ENCODE measurements at regions of chr5 and their contacts with region 1.

Region 1: DNA sequence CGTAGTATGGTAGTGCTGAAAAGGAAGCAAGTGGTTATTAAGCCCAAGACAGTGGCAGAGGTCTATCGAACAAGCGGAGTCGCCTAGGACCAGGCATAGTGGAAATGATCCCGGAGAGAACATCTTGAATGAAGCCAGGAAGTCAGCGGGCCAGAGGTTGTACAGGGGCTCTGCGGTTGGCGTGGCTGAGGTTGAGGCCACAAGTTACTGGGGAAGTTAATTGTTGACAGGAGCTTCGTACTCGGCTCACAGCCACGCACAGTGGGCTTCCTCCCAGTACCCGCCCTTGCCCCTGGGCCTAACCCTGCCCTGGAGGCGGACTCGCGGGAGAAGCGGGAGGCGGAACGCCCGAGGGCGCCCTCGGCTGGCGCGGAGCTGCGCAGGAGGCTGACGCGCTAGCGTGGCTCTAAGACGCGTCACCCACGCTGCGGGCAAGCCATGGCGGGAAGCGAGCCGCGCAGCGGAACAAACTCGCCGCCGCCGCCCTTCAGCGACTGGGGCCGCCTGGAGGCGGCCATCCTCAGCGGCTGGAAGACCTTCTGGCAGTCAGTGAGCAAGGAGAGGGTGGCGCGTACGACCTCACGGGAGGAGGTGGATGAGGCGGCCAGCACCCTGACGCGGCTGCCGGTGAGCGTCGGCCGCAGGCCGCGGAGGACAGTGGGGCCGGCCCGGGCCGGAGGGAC is at the start of gene FBXO4:
- DNase-seq: peak; percentile 82 to 89 (median 87)
- H3K4me3 ChIP-seq: peak within 1 kb of the TSS; percentile 71 to 90 (median 81)
- H3K4me3 Mint-ChIP-seq: peak within 1 kb of the TSS; percentile 89 to 92
- H3K27ac ChIP-seq: peak within 1 kb of the TSS; percentile 86 to 89
- H3K27ac Mint-ChIP-seq: peak within 1 kb of the TSS; percentile 86 to 99 (median 95)
- H3K4me1 ChIP-seq: peaks cover 15 to 23% of the 10 kb centered on the region in 2 donors
- H3K4me1 Mint-ChIP-seq: peaks cover 17% of the 10 kb centered on the region
- H3K27me3 ChIP-seq: no peaks in the 10 kb centered on the region
- H3K27me3 Mint-ChIP-seq: no peaks in the 10 kb centered on the region
- CTCF ChIP-seq: peak; percentile 67
- polyA plus RNA-seq, gene FBXO4: 3.7 to 10.4 (median 8.7) TPM

Region 2: GRCh38 chr5:41869739-41870626 is 55.0 kb before region 1 on chr5 and contains the start of gene OXCT1:
- intact Hi-C with region 1: loop called (anchors 5 to 10 kb)
- DNase-seq: peak; percentile 77 to 79 (median 79)
- H3K4me3 ChIP-seq: peak within 1 kb of the TSS; percentile 49 to 83 (median 65)
- H3K4me3 Mint-ChIP-seq: peak within 1 kb of the TSS; percentile 96 to 97
- H3K27ac ChIP-seq: peak within 1 kb of the TSS; percentile 21 to 72
- H3K27ac Mint-ChIP-seq: peak within 1 kb of the TSS in 5 of 7 donors; percentile 10 to 76 (median 73)
- H3K4me1 ChIP-seq: peaks cover 17 to 20% of the 10 kb centered on the region in 2 donors
- H3K4me1 Mint-ChIP-seq: peaks cover 21% of the 10 kb centered on the region
- H3K27me3 ChIP-seq: peaks cover 0 to 9% of the 10 kb centered on the region in 2 donors
- H3K27me3 Mint-ChIP-seq: peaks cover 5 to 17% (median 10%) of the 10 kb centered on the region in 3 donors
- CTCF ChIP-seq: no peak
- polyA plus RNA-seq, gene OXCT1: 1.3 to 3.4 (median 1.9) TPM

Region 3: GRCh38 chr5:41978676-41979075 is 53.7 kb after region 1 on chr5:
- intact Hi-C with region 1: no loop called
- DNase-seq: no peak
- H3K4me3 ChIP-seq: no peak overlapping the region
- H3K4me3 Mint-ChIP-seq: no peak overlapping the region
- H3K27ac ChIP-seq: no peak overlapping the region
- H3K27ac Mint-ChIP-seq: no peak overlapping the region
- H3K4me1 ChIP-seq: no peaks in the 10 kb centered on the region
- H3K4me1 Mint-ChIP-seq: no peaks in the 10 kb centered on the region
- H3K27me3 ChIP-seq: no peaks in the 10 kb centered on the region
- H3K27me3 Mint-ChIP-seq: peaks cover 0 to 3% (median 3%) of the 10 kb centered on the region in 3 donors
- CTCF ChIP-seq: no peak